BJ (cell line): ENCODE measurements at regions of chr20 and their contacts with region 1.

Region 1: DNA sequence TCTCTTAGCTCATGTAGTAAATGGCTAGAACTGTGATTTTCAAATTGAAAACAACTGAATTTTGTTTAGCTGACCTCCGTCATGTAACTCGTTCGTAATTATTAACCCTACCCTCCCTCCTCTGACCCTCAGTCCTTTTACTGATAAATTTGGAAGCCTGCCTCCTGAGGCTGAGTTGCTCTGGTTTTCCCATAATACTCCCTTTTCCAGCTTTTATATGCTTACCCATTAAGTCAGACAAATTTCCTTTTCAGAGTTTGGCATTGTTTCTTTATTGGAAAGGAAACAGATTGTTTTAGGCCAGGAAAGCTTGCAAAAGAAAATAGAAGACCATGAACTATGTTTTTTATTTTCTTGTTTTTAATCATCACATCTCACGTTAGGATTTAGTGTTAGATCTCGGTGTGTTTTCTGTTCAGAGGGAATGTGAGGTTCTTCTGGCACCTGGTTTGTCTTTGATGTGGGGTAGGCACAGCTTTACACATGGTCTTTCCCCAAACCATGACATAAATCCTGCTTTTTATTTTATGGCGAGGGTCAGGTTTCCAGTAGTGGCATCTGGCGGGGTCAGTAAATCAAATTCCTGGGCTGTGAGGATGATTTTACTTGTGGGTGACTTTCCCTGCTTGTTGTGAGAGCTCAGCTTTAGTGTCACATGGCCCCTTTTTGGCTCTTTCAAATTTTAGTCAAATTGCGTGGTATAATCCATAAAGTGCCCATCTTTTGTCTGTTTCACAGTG is 24.5 kb downstream of the PLCB4 start:
- DNase-seq: no peak
- H3K4me3 ChIP-seq: no peak overlapping the region
- H3K27me3 ChIP-seq: no peaks in the 10 kb centered on the region
- CTCF ChIP-seq: no peak

Region 2: DNA sequence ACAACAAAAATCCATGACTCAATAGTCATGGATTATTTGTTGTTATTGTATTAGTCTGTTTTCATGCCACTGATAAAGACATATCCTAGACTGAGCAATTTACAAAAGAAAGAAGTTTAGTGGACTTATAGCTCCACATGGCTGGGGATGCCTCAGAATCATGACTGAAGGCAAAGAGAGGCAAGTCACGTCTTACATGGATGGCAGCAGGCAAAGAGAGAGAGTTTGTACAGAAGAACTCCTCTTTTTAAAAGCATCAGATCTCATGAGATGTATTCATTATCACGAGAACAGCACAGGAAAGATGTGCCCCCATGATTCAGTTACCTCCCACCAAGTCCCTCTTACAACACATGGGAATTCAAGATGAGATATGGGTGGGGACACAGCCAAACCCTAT is 168.8 kb before region 1 on chr20:
- CTCF ChIA-PET with region 1: no interaction called
- POLR2A ChIA-PET with region 1: no interaction called
- DNase-seq: no peak
- H3K4me3 ChIP-seq: no peak overlapping the region
- H3K27me3 ChIP-seq: no peaks in the 10 kb centered on the region
- CTCF ChIP-seq: no peak

Region 3: DNA sequence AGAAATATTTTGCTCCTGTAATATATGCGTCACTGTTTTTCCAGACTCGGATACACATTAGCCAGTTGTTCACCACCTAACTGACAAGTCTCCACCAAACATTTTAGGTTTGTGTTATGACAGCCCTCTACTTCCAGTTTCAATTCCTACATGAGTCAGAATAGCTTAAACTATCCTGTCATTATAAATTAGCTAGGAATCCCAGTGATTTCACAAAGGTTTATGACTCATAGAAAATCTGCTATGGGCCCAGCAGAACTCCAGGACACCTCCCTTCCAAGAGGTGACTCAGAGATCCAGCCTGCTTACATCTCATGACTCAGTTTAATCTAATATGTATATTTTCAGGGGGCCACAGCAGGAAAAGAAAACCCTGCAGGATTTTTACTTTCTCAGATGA is 41.9 kb before region 1 on chr20:
- CTCF ChIA-PET with region 1: interaction called, 3 read pairs
- POLR2A ChIA-PET with region 1: interaction called, 14 read pairs
- DNase-seq: peak; percentile 93
- H3K4me3 ChIP-seq: no peak overlapping the region
- H3K27me3 ChIP-seq: no peaks in the 10 kb centered on the region
- CTCF ChIP-seq: no peak